ENCODE measurements at regions of chr1 and their contacts with region 1.

Region 1: DNA sequence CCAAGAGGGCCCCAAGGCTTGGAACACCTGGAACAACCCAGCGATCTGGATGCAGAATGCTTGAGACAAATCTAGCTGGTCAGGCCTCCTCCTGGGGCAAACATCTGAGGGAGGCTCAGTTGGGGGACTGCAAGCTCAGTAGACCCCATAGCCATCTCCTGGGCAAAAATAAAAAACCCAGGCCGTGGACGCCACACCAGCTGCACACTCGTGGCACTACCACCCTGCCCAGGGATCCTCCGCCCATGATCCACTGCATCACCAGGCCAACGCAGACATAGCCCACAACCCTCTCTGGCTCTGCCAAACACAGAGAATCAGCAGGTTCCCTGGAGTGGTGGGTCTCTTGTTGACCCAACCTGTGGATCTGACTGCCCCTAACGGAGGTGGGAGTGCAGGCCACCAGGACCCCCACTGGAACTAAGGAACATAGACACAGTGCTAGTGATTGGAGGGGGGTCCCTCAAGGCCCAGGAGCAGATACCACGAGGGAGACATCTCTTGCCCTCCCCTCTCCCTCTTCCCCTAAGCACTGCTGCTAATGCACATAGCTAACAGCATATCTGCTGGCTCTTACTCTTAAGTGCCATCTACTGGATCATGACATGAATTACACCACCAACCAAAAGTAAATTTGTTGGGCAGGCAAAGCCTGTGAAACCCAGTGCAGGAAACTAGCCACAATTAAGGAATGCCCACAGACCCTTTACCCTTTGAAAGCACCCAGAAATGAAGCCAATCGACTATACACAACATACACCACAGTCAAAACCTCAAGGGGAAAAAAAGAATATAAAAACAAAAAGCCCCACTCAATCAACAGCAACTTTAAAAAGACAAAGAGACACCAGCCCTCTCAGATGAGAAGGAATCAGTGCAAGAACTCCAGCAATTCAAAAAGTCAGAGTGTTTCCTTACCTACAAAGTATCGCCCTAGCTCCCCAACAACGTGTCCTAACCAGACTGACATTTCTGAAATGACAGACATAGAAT is 147.3 kb downstream of the CHD1L start:
- DNase-seq: peak; percentile 2
- H3K4me3 ChIP-seq: no peak overlapping the region
- H3K27me3 ChIP-seq: no peaks in the 10 kb centered on the region
- CTCF ChIP-seq: peak; percentile 79

Region 2: DNA sequence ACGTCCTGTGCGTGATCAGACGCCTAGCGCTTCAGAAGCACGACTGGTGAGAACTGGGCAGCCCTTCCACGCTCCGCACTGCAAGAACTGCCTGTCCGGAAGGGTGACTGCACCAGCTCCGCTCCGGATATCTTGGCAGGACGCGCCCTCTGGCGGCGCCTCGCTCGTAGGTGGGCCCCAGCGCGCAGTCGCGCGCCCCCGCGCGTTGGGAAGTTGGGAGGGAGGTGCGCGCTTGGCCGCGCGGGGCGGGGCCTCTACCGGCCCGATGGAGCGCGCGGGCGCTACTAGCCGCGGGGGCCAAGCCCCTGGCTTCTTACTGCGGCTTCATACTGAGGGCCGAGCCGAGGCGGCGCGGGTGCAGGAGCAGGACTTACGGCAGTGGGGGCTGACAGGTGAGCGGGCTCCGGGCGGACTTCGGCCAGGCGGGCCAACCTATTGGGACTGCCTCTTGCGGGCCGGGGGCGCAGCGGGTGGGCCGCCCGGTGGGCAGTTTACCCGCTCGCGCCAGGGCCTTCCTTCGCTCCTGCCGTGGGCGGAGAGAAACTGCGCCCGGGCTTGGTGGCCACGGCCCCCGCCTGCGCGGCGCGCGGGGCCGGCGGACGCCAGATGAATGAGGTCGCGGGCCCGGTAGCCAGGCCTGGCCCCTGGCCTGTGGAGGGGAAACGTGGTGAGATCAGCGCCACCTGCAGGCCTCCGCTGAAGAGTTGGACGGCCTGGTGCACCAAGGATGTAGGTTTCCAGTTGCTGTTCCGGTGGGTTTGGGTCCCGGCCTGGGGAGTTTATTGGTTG is 147.2 kb before region 1 on chr1 and contains the start of gene CHD1L:
- CTCF ChIA-PET with region 1: interaction called, 20 read pairs
- POLR2A ChIA-PET with region 1: no interaction called
- DNase-seq: peak; percentile 57
- H3K4me3 ChIP-seq: peak within 1 kb of the TSS; percentile 96
- H3K27me3 ChIP-seq: no peaks in the 10 kb centered on the region
- CTCF ChIP-seq: peak; percentile 87
- polyA plus RNA-seq, gene CHD1L: 20.2 and 30.1 TPM in 2 replicates

Region 3: DNA sequence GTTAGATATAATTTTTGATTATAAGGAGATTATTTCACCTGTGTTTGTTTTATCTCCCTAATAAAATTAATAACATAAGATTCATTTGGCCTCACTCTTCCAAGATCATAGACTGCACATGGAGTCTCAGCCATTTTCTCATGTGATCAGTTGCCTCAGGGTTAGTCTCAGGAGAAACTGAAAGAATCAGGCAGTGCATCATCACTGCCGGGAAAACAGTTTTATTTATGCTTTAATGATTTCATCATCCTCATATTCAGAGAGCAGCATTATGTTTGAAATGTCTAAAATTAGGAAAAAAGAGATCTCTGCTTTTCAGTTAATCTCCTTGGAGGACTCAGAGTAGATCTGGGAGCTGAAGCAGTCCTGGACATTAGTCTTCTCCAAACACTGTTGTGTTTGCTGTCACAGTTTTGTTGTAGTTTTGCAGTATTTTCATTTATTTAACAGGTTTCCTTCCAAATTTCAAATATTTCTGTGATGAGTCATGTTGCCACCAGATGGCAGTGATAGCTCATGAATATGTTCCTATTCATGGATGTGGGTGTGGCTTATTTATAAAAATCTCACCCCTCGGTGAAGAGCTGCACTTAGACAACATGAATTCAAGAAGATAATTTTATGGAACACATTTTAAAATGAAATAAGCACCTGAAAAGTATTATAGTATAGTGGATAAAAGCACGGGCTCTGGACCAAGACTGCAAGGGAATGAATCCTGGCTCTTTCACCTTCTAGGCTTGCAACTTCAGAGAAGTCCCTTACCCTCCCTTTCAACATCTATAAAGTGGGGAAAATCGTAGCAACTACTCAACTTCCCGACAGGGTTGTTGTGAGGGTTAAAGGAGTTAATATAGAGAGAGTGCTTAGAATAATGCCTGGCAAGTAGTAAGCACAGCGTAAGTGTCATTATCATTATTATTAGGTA is 116.2 kb before region 1 on chr1:
- CTCF ChIA-PET with region 1: interaction called, 68 read pairs
- POLR2A ChIA-PET with region 1: no interaction called
- DNase-seq: peak; percentile 66
- H3K4me3 ChIP-seq: peak overlapping the region; percentile 22
- H3K27me3 ChIP-seq: no peaks in the 10 kb centered on the region
- CTCF ChIP-seq: peak; percentile 22; the same call in 1 of the 2 replicates

Region 4: DNA sequence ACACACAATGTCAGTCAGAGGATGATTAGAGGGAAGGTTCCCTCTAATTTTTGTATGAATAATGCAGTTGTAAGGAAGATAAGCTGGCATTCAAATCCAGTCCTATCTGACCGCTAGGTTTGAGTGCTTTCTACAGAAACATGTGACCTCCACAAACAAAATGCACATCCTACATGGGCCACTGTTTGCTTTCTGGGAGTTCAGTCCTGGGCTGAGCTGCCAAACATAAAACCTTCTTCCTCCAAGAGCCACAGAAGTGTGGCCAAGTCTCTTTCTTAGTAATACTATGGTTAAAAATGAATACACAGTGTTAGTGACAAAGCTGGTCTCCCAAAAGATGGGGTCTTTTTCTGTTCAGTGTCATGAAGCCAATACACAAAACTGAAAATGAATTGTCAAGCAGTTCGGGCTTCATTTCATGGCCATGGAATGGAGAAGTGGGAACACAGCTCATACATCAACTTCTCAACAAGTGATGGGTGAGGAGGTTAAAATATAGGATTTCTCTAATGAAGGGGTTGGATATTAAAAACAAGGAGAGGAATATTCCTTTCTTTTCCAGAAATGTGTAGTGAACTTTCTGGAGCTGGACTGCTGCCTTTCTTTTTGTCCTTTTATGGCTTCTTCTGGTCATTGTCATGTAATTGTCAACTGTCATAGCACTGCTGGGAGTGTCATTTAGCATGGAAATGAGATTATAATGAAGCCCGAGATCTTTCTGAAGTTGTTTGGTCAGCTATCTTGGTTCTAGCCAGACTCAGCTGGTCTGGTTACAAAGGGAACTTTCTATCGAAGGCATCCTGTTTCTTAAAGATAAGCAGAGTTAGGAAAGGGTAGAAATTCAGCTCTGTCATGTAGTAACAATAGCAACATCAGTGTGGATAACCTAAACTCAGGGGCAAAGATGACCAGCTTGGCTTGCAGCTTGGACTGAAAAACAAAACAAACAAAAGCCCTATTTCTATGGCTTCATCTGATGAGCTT is 12.3 kb before region 1 on chr1:
- CTCF ChIA-PET with region 1: interaction called, 25 read pairs
- POLR2A ChIA-PET with region 1: no interaction called
- DNase-seq: no peak
- H3K4me3 ChIP-seq: no peak overlapping the region
- H3K27me3 ChIP-seq: no peaks in the 10 kb centered on the region
- CTCF ChIP-seq: no peak

Region 5: DNA sequence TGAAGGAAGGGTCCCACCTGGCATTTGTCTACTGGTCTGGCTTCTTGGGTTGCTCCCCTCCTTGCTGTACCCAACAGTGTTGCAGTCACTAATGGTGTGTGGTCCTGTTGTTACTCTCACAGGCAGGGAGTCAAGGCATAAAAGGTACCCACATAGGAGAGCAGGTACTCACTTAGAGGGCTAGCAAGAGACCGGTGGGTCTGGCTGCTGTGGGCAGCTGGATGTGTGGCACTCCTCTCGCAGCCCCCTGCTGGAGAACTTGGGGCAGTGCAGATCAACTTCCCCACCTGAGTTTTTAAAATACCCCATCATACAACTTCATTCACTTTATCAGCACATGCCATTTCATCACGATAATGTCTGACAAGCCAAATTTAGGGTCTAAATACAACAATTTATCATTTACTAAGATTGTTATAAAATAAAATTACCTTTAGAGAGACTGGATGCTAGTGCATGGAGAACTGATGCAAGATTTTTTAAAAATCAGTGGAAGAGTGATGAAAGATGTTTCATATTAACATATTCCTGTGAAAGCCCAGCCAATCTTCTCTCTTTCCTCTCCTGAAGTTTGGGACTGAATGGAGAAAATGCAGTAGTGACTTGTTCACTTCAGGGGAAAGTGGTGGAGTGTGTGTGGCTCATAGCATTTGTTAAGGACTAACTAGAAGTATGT is 237.7 kb after region 1 on chr1:
- CTCF ChIA-PET with region 1: no interaction called
- POLR2A ChIA-PET with region 1: no interaction called
- DNase-seq: no peak
- H3K4me3 ChIP-seq: no peak overlapping the region
- H3K27me3 ChIP-seq: no peaks in the 10 kb centered on the region
- CTCF ChIP-seq: peak; percentile 96